Endothelial cell of umbilical vein (primary cell): ENCODE measurements at regions of chr16 and their contacts with region 1.

Region 1: DNA sequence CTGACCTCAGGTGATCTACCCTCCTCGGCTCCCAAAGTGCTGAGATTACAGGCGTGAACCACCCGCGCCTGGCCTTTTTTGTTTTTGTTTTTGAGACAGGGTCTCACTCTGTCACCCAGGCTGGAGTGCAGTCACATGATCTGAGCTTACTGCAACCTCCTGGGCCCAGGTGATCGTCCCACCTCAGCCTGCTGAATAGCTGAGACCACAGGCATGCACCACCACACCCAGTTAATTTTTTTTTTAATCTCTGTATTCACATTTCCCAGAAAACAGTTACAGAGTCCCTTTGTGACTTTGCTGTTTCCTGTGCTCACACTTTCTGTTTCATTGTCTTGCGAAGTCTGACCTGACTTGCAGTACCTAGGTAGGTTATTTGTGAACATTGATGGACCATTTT is 2.7 kb downstream of the CLUAP1 start:
- DNase-seq: no peak
- H3K4me3 ChIP-seq: no peak overlapping the region
- H3K27ac ChIP-seq: no peak overlapping the region
- H3K4me1 ChIP-seq: peaks cover 5% of the 10 kb centered on the region
- H3K27me3 ChIP-seq: no peaks in the 10 kb centered on the region
- CTCF ChIP-seq: no peak
- POLR2A ChIP-seq: no peak

Region 2: GRCh38 chr16:2752035-2752849 is 751.3 kb before region 1 on chr16 and contains the start of gene SRRM2:
- CTCF ChIA-PET with region 1: no interaction called
- POLR2A ChIA-PET with region 1: no interaction called
- dilution Hi-C with region 1: no loop called
- intact Hi-C with region 1: loop called (anchors 5 kb)
- DNase-seq: peak; percentile 98
- H3K4me3 ChIP-seq: peak within 1 kb of the TSS; percentile 91 to 96 (median 93)
- H3K27ac ChIP-seq: peak within 1 kb of the TSS; percentile 65
- H3K4me1 ChIP-seq: peaks cover 26% of the 10 kb centered on the region
- H3K27me3 ChIP-seq: no peaks in the 10 kb centered on the region
- CTCF ChIP-seq: no peak
- POLR2A ChIP-seq: peak; percentile 81
- total RNA-seq, gene SRRM2: 483 and 492 TPM in 2 replicates

Region 3: DNA sequence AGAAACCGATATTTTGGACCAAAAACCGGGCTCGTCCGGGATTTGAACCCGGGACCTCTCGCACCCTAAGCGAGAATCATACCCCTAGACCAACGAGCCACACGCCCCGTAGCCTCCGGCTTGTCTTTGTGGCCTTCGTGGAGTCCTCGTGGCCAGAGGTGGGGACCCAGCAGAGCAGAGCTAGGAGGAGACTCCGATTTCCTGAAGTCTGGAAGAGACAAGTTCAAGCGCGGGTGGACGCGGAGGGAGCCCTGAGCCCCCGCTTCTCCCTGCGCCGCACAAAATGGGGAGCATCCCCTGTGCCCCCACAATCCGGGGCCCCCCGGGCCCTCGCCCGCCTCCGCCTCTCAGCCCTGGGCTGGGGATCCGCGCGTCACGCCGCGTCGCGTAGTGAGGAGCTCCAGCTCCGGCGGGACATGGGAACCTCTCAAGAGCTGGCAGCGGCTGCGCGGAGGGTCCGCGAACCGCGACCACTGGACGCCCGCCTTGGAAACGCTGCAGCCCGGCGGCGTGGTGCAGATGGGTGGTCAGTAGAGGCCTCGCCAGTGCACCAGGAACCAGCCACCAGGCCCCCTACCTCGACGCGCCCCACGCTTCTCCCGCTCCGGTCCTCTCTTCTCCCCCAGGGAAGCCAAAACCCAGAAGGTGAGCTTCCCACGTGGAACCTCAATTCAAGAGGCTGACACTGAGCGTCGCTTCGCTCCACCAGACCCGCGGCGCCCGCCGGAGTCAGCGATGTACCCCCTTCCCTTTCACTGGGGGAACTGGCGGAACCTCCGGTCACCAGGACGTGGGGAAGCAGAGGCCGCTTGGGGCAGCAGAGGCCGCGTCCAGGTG is 320.7 kb before region 1 on chr16:
- CTCF ChIA-PET with region 1: interaction called, 3 read pairs
- POLR2A ChIA-PET with region 1: no interaction called
- dilution Hi-C with region 1: no loop called
- intact Hi-C with region 1: loop called (anchors 2 kb)
- DNase-seq: peak; percentile 45
- H3K4me3 ChIP-seq: peak overlapping the region; percentile 36 to 79 (median 67)
- H3K27ac ChIP-seq: no peak overlapping the region
- H3K4me1 ChIP-seq: peaks cover 15% of the 10 kb centered on the region
- H3K27me3 ChIP-seq: peaks cover 10% of the 10 kb centered on the region in 2 experiments
- CTCF ChIP-seq: peak in 1 of 2 donors; percentile 51
- POLR2A ChIP-seq: no peak

Region 4: GRCh38 chr16:3193221-3194211 is 310.0 kb before region 1 on chr16:
- CTCF ChIA-PET with region 1: no interaction called
- POLR2A ChIA-PET with region 1: no interaction called
- dilution Hi-C with region 1: no loop called
- intact Hi-C with region 1: no loop called
- DNase-seq: no peak
- H3K4me3 ChIP-seq: no peak overlapping the region
- H3K27ac ChIP-seq: no peak overlapping the region
- H3K4me1 ChIP-seq: peaks cover 12% of the 10 kb centered on the region
- H3K27me3 ChIP-seq: peaks cover 4 to 6% of the 10 kb centered on the region in 2 experiments
- CTCF ChIP-seq: no peak
- POLR2A ChIP-seq: no peak

Region 5: GRCh38 chr16:3364774-3365427 is 138.6 kb before region 1 on chr16:
- CTCF ChIA-PET with region 1: no interaction called
- POLR2A ChIA-PET with region 1: no interaction called
- dilution Hi-C with region 1: no loop called
- intact Hi-C with region 1: loop called (anchors 2 kb)
- DNase-seq: peak; percentile 95
- H3K4me3 ChIP-seq: peak overlapping the region; percentile 25 to 68 (median 57)
- H3K27ac ChIP-seq: peak overlapping the region; percentile 71
- H3K4me1 ChIP-seq: peaks cover 2% of the 10 kb centered on the region
- H3K27me3 ChIP-seq: no peaks in the 10 kb centered on the region
- CTCF ChIP-seq: no peak
- POLR2A ChIP-seq: peak; percentile 47

Region 6: DNA sequence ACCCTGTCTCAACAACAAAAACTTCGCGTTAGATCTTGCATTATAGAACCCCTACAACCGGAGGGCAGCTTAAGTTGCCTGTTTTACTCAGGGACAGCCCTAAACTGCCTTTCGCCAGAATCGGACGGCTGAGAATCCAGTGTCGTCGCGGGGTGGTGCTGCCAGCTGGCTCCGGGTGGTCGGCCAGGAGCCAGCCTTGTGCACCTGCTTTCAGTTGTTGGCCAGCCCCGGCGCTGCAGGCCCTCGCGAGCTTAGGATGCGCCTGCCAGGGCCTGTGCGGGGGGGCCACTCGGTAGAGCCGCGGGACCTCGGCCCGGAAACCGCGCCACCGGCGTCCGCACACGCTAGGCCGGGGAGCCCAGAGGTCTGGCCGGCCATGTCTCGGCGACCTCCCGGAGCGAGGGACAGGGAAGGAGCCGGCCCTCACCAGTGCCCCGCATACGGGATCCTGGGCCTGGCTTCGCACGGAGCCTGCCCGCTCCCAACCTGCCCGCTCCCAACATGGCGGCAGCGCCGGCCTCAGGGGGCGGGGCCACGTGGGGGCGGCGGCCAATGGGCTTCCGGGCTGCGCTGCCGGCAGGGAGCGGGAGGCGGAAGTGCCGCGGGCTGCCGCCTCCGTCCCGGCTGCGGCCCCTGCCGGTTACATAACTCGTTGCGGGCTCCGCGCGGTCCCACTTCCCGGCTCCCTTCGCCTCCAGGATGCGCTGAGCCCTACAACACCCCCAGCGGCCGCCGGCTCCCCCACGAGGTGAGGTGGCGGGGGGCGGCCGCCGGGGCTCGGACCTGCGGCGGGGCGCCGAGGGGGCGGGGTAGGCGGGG is 45.9 kb before region 1 on chr16:
- CTCF ChIA-PET with region 1: interaction called, 4 read pairs
- POLR2A ChIA-PET with region 1: no interaction called
- dilution Hi-C with region 1: no loop called
- intact Hi-C with region 1: loop called (anchors 1 kb)
- DNase-seq: peak; percentile 88
- H3K4me3 ChIP-seq: peak overlapping the region; percentile 44 to 62 (median 47)
- H3K27ac ChIP-seq: peak overlapping the region; percentile 77
- H3K4me1 ChIP-seq: peaks cover 27% of the 10 kb centered on the region
- H3K27me3 ChIP-seq: no peaks in the 10 kb centered on the region
- CTCF ChIP-seq: peak; percentile 38 to 64
- POLR2A ChIP-seq: peak; percentile 77

Region 7: DNA sequence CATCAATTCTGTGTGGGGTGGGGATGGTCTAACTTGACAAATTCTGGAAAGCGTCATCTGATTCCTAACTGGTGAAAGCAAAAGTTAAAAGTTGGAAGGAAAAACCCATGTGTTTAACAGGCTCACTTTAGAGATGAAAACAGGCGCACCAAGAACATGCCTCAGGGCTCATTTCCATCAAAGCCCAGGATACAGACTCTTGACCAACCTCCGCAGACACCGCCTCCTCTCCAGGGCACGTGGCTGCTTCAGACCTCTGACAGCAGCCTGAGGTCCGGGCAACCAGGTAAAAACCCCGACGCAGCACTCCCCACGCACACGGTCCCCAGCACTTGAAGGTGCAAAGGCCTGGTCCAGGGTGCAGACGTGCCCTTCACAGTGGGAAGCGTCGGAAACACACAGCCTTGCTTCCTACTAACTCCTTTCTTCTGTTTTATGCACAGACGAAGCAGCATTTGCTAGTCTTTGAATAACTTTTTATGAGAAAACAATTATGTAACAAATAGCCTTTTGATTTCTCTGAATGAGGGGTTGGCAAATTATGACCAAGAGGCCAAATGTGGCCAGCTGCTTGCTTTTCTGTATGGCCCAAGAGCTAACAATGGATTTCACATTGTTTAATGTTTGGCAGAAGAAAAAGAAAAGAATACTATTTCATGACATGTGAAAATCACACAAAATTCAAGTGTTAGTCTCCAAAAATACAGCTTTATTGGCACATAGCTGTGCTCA is 258.0 kb after region 1 on chr16:
- CTCF ChIA-PET with region 1: no interaction called
- POLR2A ChIA-PET with region 1: no interaction called
- dilution Hi-C with region 1: no loop called
- intact Hi-C with region 1: no loop called
- DNase-seq: no peak
- H3K4me3 ChIP-seq: no peak overlapping the region
- H3K27ac ChIP-seq: no peak overlapping the region
- H3K4me1 ChIP-seq: no peaks in the 10 kb centered on the region
- H3K27me3 ChIP-seq: no peaks in the 10 kb centered on the region
- CTCF ChIP-seq: no peak
- POLR2A ChIP-seq: no peak